A549 (cell line): ENCODE measurements at regions of chr17 and their contacts with region 1.

Region 1: GRCh38 chr17:4220655-4221054 is 43.1 kb downstream of the ANKFY1 start:
- DNase-seq: no peak
- ATAC-seq: no peak
- H3K4me3 ChIP-seq: no peak overlapping the region
- H3K27ac ChIP-seq: no peak overlapping the region
- H3K4me1 ChIP-seq: no peaks in the 10 kb centered on the region
- CTCF ChIP-seq: no peak
- EP300 ChIP-seq: no peak
- POLR2A ChIP-seq: no peak
- RAD21 ChIP-seq: no peak

Region 2: DNA sequence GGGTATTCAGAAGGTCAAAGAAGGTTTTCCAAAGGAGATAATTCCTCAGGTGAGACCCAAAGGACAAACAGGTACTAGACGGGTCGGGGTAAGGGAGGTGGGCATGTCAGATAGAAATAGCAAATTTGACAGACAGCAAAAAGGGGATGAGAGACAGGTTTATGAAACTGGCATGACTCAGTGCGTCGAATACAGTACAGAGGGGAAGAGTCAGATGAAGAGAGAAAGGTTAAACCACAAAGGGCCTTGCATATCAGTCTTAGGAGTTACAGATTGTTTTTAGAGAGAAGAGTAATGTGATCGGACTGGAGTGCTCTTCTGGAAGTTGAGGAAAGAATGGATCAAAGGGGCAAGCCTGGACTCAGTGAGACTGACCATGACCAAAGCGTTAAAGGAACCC is 166.2 kb before region 1 on chr17:
- CTCF ChIA-PET with region 1: no interaction called
- POLR2A ChIA-PET with region 1: no interaction called
- DNase-seq: no peak
- ATAC-seq: no peak
- H3K4me3 ChIP-seq: no peak overlapping the region
- H3K27ac ChIP-seq: no peak overlapping the region
- H3K4me1 ChIP-seq: no peaks in the 10 kb centered on the region
- CTCF ChIP-seq: no peak
- EP300 ChIP-seq: no peak
- POLR2A ChIP-seq: no peak
- RAD21 ChIP-seq: no peak

Region 3: GRCh38 chr17:4152471-4152870 is 68.2 kb before region 1 on chr17:
- CTCF ChIA-PET with region 1: no interaction called
- POLR2A ChIA-PET with region 1: no interaction called
- DNase-seq: no peak
- ATAC-seq: no peak
- H3K4me3 ChIP-seq: no peak overlapping the region
- H3K27ac ChIP-seq: no peak overlapping the region
- H3K4me1 ChIP-seq: no peaks in the 10 kb centered on the region
- CTCF ChIP-seq: no peak
- EP300 ChIP-seq: no peak
- POLR2A ChIP-seq: no peak
- RAD21 ChIP-seq: no peak

Region 4: GRCh38 chr17:4175921-4176807 is 44.5 kb before region 1 on chr17:
- CTCF ChIA-PET with region 1: interaction called, 12 read pairs
- POLR2A ChIA-PET with region 1: no interaction called
- DNase-seq: no peak
- ATAC-seq: no peak
- H3K4me3 ChIP-seq: no peak overlapping the region
- H3K27ac ChIP-seq: no peak overlapping the region
- H3K4me1 ChIP-seq: no peaks in the 10 kb centered on the region
- CTCF ChIP-seq: no peak
- EP300 ChIP-seq: no peak
- POLR2A ChIP-seq: no peak
- RAD21 ChIP-seq: no peak

Region 5: DNA sequence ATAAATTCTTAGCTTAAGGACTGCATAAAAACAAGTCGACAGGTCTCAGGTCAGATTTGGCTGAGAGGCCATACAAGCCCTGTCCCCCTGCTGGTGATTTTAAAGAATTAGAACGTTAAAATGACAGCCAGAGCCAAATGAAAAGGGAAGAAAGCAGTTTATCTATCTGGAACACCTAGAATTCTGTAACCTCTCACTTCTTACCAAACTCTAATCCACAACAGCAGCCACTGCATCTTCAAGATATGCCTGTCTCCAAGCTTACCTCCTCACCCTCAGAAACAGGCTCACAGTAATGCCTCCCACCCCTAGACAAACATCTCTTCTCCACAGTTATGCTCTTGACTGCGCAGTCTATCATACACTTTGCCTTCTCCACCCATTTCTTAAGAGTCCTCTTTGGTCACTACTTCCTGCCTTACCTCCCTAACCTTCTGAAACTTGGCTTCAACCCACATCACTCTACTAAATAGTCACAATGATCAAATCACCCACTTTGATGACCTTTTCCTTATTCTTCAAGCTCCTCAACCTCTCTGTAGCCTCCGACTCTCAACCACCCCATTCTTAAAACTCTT is 28.9 kb after region 1 on chr17:
- CTCF ChIA-PET with region 1: interaction called, 56 read pairs
- POLR2A ChIA-PET with region 1: no interaction called
- DNase-seq: peak; percentile 69 to 78
- ATAC-seq: peak; percentile 82 to 87
- H3K4me3 ChIP-seq: no peak overlapping the region
- H3K27ac ChIP-seq: no peak overlapping the region
- H3K4me1 ChIP-seq: peaks cover 11% of the 10 kb centered on the region; the same call in 2 of the 3 replicates
- CTCF ChIP-seq: peak; percentile 62
- EP300 ChIP-seq: no peak
- POLR2A ChIP-seq: no peak
- RAD21 ChIP-seq: peak in 1 of 2 experiments; percentile 48; a peak in 2 of 5 replicates

Region 6: GRCh38 chr17:4272213-4272971 is 51.7 kb after region 1 on chr17:
- CTCF ChIA-PET with region 1: interaction called, 10 read pairs
- POLR2A ChIA-PET with region 1: no interaction called
- DNase-seq: no peak
- ATAC-seq: no peak
- H3K4me3 ChIP-seq: no peak overlapping the region
- H3K27ac ChIP-seq: no peak overlapping the region
- H3K4me1 ChIP-seq: no peaks in the 10 kb centered on the region
- CTCF ChIP-seq: no peak
- EP300 ChIP-seq: no peak
- POLR2A ChIP-seq: no peak
- RAD21 ChIP-seq: no peak

Region 7: DNA sequence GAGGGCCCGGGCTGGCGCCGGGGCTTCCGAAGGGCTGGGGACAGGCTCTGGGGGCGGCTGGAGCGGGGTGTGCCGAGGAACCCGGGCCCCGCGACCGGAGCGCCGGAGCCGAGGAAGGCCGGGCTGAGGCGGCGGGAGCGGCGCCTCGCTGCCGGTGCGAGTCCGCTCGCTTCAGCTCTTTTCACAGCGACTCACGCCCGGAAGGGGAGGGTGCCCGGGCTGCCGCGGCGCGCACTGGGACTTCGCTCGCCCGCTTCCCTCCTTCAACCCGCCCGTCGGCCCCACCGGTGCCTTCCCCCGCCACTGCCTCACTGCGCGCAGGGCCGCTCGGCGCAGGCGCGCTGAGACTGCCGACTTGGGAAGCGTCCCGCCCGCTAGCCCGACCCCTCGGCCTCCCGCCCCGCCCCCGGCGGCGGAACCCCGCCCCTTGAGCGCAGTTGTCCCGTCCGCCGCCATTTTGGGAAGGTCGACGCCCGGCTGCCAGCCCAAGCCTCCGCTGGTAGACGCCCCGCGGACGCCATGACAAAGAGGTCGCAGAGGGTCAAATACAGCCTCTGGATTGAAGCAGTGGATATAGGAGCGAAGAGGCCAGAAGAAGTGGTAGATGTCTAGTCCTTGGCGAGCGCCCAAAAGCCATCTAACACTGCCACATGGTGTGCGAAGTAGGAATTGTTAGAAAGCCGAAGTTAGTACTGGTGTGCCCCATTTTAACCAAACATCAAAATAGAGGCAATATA is 145.8 kb after region 1 on chr17 and contains the start of gene UBE2G1:
- CTCF ChIA-PET with region 1: interaction called, 20 read pairs
- POLR2A ChIA-PET with region 1: no interaction called
- DNase-seq: peak; percentile 99
- ATAC-seq: peak; percentile 81 to 91
- H3K4me3 ChIP-seq: peak within 1 kb of the TSS; percentile 98
- H3K27ac ChIP-seq: peak within 1 kb of the TSS; percentile 95 to 96
- H3K4me1 ChIP-seq: peaks cover 13% of the 10 kb centered on the region
- CTCF ChIP-seq: peak; percentile 64
- EP300 ChIP-seq: 0 out of 5 replicates have a peak, but pooled peaks of 1 of the 2 experiments have one; percentile 1
- POLR2A ChIP-seq: peak; percentile 97
- RAD21 ChIP-seq: peak; percentile 87 to 90
- polyA plus RNA-seq, gene UBE2G1: 100 and 117 TPM in 2 replicates

Region 8: GRCh38 chr17:4412933-4413831 is 192.5 kb after region 1 on chr17:
- CTCF ChIA-PET with region 1: interaction called, 86 read pairs
- POLR2A ChIA-PET with region 1: no interaction called
- DNase-seq: peak; percentile 91 to 92
- ATAC-seq: peak; percentile 99 to 100
- H3K4me3 ChIP-seq: no peak overlapping the region
- H3K27ac ChIP-seq: no peak overlapping the region
- H3K4me1 ChIP-seq: no peaks in the 10 kb centered on the region
- CTCF ChIP-seq: peak; percentile 98
- EP300 ChIP-seq: no peak
- POLR2A ChIP-seq: no peak
- RAD21 ChIP-seq: peak; percentile 99 to 100